Caco-2 (cell line): ENCODE measurements at regions of chr4 and their contacts with region 1.

Region 1: GRCh38 chr4:112112590-112113136 is 32.6 kb upstream of the FAM241A start:
- DNase-seq: peak in 1 of 2 experiments; percentile 2
- H3K4me3 ChIP-seq: no peak overlapping the region
- H3K4me3 Mint-ChIP-seq: peak overlapping the region; percentile 65
- H3K27ac Mint-ChIP-seq: peak overlapping the region; percentile 68
- H3K4me1 ChIP-seq: peaks cover 28% of the 10 kb centered on the region
- H3K4me1 Mint-ChIP-seq: peaks cover 24% of the 10 kb centered on the region
- H3K27me3 ChIP-seq: no peaks in the 10 kb centered on the region
- H3K27me3 Mint-ChIP-seq: no peaks in the 10 kb centered on the region
- CTCF ChIP-seq: no peak

Region 2: GRCh38 chr4:112145326-112145819 is 32.7 kb after region 1 on chr4 and contains the start of gene FAM241A:
- CTCF ChIA-PET with region 1: no interaction called
- POLR2A ChIA-PET with region 1: no interaction called
- intact Hi-C with region 1: loop called (anchors 1 kb)
- DNase-seq: peak; percentile 80 to 85
- H3K4me3 ChIP-seq: peak within 1 kb of the TSS; percentile 72
- H3K4me3 Mint-ChIP-seq: peak within 1 kb of the TSS; percentile 82
- H3K27ac Mint-ChIP-seq: peak within 1 kb of the TSS; percentile 60
- H3K4me1 ChIP-seq: no peaks in the 10 kb centered on the region
- H3K4me1 Mint-ChIP-seq: peaks cover 18% of the 10 kb centered on the region
- H3K27me3 ChIP-seq: no peaks in the 10 kb centered on the region
- H3K27me3 Mint-ChIP-seq: no peaks in the 10 kb centered on the region
- CTCF ChIP-seq: no peak
- total RNA-seq, gene FAM241A: 1.0 and 1.1 TPM in 2 replicates